Dendritic cell treated with granulocyte-macrophage colony-stimulating factor and Interleukin-4, amounts not matched to agents 40 ng/mL and 50 ng/mL, for 4 days (primary cell): ENCODE measurements at regions of chr6 and their contacts with region 1.

Region 1: GRCh38 chr6:15264902-15265761 is 19.3 kb downstream of the JARID2 start:
- H3K4me3 Mint-ChIP-seq: no peak overlapping the region
- H3K27ac Mint-ChIP-seq: peak overlapping the region; percentile 66
- H3K4me1 Mint-ChIP-seq: peaks cover 86% of the 10 kb centered on the region
- H3K27me3 Mint-ChIP-seq: no peaks in the 10 kb centered on the region

Region 2: GRCh38 chr6:15305496-15305895 is 40.4 kb after region 1 on chr6:
- intact Hi-C with region 1: loop called (anchors 5 kb)
- H3K4me3 Mint-ChIP-seq: no peak overlapping the region
- H3K27ac Mint-ChIP-seq: peak overlapping the region; percentile 68
- H3K4me1 Mint-ChIP-seq: peaks cover 73% of the 10 kb centered on the region
- H3K27me3 Mint-ChIP-seq: no peaks in the 10 kb centered on the region

Region 3: GRCh38 chr6:15365273-15365687 is 100.1 kb after region 1 on chr6:
- intact Hi-C with region 1: no loop called
- H3K4me3 Mint-ChIP-seq: peak overlapping the region; percentile 19
- H3K27ac Mint-ChIP-seq: peak overlapping the region; percentile 60
- H3K4me1 Mint-ChIP-seq: peaks cover 50% of the 10 kb centered on the region
- H3K27me3 Mint-ChIP-seq: no peaks in the 10 kb centered on the region

Region 4: GRCh38 chr6:15621203-15622044 is 356.3 kb after region 1 on chr6:
- intact Hi-C with region 1: loop called (anchors 10 kb)
- H3K4me3 Mint-ChIP-seq: no peak overlapping the region
- H3K27ac Mint-ChIP-seq: peak overlapping the region; percentile 93
- H3K4me1 Mint-ChIP-seq: peaks cover 24% of the 10 kb centered on the region
- H3K27me3 Mint-ChIP-seq: no peaks in the 10 kb centered on the region